HepG2 (cell line): ENCODE measurements at regions of chr11 and their contacts with region 1.

Region 1: DNA sequence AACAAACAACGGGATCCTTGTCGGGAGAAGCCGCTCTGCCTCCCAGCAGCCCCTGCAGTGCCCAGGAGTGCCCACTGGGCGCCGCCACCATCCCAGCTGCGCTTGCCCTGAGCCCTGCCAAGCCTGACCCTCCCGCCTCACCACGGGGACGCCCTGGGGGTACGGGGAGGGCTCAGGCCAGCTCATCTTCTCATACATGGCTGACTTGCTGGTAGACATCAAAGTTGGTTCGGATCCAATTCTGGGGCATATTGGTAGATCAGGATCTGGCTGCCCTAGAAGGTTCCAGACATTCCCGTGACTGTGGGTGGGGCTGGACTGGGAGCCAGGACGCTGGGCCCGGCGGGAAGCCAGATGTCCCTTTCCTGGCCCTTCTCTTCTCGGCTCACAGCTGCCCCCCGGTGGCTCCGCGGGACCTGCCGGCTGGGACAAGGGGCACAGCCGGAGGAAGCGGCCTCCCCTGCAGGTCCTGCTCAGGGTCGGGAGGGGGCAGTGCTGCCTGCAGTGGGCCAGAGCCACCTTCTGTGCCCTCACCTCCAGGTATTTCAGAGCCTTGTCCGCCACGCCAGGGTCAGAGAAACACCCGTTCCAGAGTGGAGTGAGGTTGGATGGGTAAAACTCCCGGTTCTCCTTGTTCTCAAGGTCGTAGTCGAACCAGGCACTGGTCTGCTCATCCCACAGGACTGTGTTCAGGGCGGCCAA is 10.6 kb upstream of the TREH start:
- DNase-seq: peak; percentile 90
- ATAC-seq: peak; percentile 90
- H3K4me3 ChIP-seq: peak overlapping the region; percentile 53 to 75 (median 57); a peak in 5 of 6 replicates
- H3K27ac ChIP-seq: peak overlapping the region; percentile 63
- H3K4me1 ChIP-seq: peaks cover 70% of the 10 kb centered on the region
- H3K27me3 ChIP-seq: peaks cover 0 to 6% of the 10 kb centered on the region in 2 experiments; a peak in 1 of 5 replicates
- CTCF ChIP-seq: peak; percentile 92
- EP300 ChIP-seq: no peak
- POLR2A ChIP-seq: peak in 1 of 2 experiments; percentile 24; a peak in 2 of 4 replicates
- RAD21 ChIP-seq: peak; percentile 98

Region 2: DNA sequence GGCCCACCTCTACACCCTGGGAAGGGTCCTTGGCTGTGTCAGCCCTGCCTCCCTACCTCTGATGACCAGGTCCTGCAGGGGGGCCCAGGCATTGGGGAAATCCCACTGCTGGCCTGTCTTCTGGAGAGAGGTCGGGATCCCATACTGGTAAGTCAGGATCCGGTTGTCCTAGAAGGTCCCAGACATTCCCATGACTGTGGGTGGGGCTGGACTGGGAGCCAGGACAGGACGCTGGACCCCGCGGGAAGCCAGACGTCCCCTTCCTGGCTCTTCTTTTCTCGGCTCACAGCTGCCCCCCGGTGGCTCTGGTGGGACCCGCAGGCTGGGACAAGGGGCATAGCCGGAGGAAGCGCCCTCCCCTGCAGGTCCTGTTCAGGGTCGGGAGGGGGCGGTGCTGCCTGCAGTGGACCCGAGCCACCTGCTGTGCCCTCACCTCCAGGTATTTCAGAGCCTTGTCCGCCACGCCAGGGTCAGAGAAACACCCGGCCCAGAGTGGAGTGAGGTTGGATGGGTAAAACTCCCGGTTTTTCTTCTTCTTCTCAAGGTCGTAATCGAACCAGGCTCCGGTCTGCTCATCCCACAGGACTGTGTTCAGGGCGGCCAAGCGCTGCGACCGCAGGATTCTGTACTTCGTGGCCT is 30.6 kb before region 1 on chr11:
- CTCF ChIA-PET with region 1: interaction called, 49 read pairs
- POLR2A ChIA-PET with region 1: interaction called, 5 read pairs
- in situ Hi-C with region 1: no loop called
- intact Hi-C with region 1: loop called (anchors 1 kb)
- DNase-seq: peak; percentile 82
- ATAC-seq: peak; percentile 90
- H3K4me3 ChIP-seq: peak overlapping the region in 2 of 3 experiments; percentile 25 to 53; a peak in 2 of 6 replicates
- H3K27ac ChIP-seq: no peak overlapping the region
- H3K4me1 ChIP-seq: peaks cover 35% of the 10 kb centered on the region
- H3K27me3 ChIP-seq: no peaks in the 10 kb centered on the region
- CTCF ChIP-seq: peak; percentile 99
- EP300 ChIP-seq: 0 out of 4 replicates have a peak, but pooled peaks of 1 of the 2 experiments have one; percentile 8
- POLR2A ChIP-seq: no peak
- RAD21 ChIP-seq: peak; percentile 97

Region 3: GRCh38 chr11:118679483-118679882 is 10.5 kb before region 1 on chr11 and contains the start of gene TREH:
- CTCF ChIA-PET with region 1: interaction called, 5 read pairs
- POLR2A ChIA-PET with region 1: interaction called, 14 read pairs
- in situ Hi-C with region 1: no loop called
- intact Hi-C with region 1: loop called (anchors 1 kb)
- DNase-seq: peak; percentile 61
- ATAC-seq: peak; percentile 80
- H3K4me3 ChIP-seq: peak within 1 kb of the TSS; percentile 40 to 73 (median 61)
- H3K27ac ChIP-seq: no peak within 1 kb of the TSS
- H3K4me1 ChIP-seq: peaks cover 33% of the 10 kb centered on the region
- H3K27me3 ChIP-seq: no peaks in the 10 kb centered on the region
- CTCF ChIP-seq: no peak
- EP300 ChIP-seq: no peak
- POLR2A ChIP-seq: peak in 1 of 2 experiments; percentile 75; a peak in 2 of 4 replicates
- RAD21 ChIP-seq: no peak
- total RNA-seq, gene TREH: 0.46 and 0.86 TPM in 2 replicates

Region 4: GRCh38 chr11:118791111-118791965 is 101.3 kb after region 1 on chr11 and contains the start of gene DDX6:
- CTCF ChIA-PET with region 1: no interaction called
- POLR2A ChIA-PET with region 1: interaction called, 28 read pairs
- in situ Hi-C with region 1: no loop called
- intact Hi-C with region 1: loop called (anchors 1 kb)
- DNase-seq: peak; percentile 67
- ATAC-seq: peak; percentile 80
- H3K4me3 ChIP-seq: peak within 1 kb of the TSS; percentile 91 to 98 (median 97)
- H3K27ac ChIP-seq: peak within 1 kb of the TSS; percentile 99
- H3K4me1 ChIP-seq: peaks cover 34% of the 10 kb centered on the region
- H3K27me3 ChIP-seq: peaks cover 0 to 2% of the 10 kb centered on the region in 2 experiments; a peak in 2 of 5 replicates
- CTCF ChIP-seq: peak; percentile 64
- EP300 ChIP-seq: no peak
- POLR2A ChIP-seq: peak; percentile 58 to 83
- RAD21 ChIP-seq: no peak
- total RNA-seq, gene DDX6: 59.2 and 163 TPM in 2 replicates

Region 5: GRCh38 chr11:118956094-118956846 is 266.3 kb after region 1 on chr11 and contains the start of gene UPK2:
- CTCF ChIA-PET with region 1: interaction called, 31 read pairs
- POLR2A ChIA-PET with region 1: no interaction called
- in situ Hi-C with region 1: loop called (anchors 5 kb)
- intact Hi-C with region 1: loop called (anchors 1 kb)
- DNase-seq: peak; percentile 64
- ATAC-seq: peak; percentile 97
- H3K4me3 ChIP-seq: no peak within 1 kb of the TSS
- H3K27ac ChIP-seq: no peak within 1 kb of the TSS
- H3K4me1 ChIP-seq: no peaks in the 10 kb centered on the region
- H3K27me3 ChIP-seq: peaks cover 2 to 53% of the 10 kb centered on the region in 2 experiments; a peak in 4 of 5 replicates
- CTCF ChIP-seq: peak; percentile 98
- EP300 ChIP-seq: no peak
- POLR2A ChIP-seq: no peak
- RAD21 ChIP-seq: peak; percentile 97
- total RNA-seq, gene UPK2: not detected in 2 replicates